HEK293T (cell line): ENCODE measurements at regions of chr1 and their contacts with region 1.

Region 1: GRCh38 chr1:225474986-225475820 is 47.4 kb upstream of the LBR start:
- DNase-seq: peak; percentile 94

Region 2: GRCh38 chr1:225428068-225428880 is 46.9 kb before region 1 on chr1:
- CTCF ChIA-PET with region 1: interaction called, 10 read pairs
- POLR2A ChIA-PET with region 1: no interaction called
- DNase-seq: peak; percentile 95

Region 3: DNA sequence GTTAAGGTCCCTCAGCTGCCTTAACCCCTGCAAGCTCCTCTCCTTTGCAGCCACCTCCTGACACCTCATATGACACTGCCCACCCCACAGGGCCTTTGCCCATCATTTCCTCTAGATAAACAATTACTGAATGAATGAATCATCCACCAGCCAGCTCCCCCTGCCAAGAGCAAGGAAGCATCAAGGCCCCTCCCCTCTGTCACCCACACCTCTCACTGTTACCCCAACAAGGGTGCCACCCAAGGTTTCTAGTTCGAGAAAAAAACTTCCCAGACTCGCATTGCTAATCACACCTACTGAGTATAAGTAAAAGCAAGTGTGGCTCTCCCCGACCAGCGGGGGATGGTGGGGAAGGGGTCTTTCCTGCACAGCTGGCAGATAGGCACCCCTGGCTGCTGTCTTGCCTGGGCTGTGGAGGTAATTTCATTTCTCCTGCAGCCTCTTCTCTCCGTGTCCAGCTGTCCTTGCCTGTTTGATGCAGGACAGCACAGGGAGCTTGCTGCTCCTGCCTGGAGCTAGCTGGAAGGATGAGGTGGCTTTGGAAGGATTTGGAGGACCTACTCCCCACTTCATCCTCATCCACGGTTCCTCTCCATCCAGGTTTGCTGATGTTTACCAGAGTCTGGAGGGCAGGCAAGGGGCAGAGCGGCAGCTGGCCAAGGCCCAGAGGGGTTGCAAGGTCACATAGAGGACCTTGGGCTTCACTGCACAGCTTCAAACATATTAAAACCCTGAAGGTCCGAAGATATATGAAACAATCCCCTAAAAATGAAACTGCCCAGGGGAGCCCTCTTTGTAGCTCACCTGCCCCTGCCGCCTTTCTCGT is 14.3 kb before region 1 on chr1:
- CTCF ChIA-PET with region 1: interaction called, 17 read pairs
- POLR2A ChIA-PET with region 1: no interaction called
- DNase-seq: no peak

Region 4: GRCh38 chr1:225772323-225772768 is 297.1 kb after region 1 on chr1:
- CTCF ChIA-PET with region 1: interaction called, 25 read pairs
- POLR2A ChIA-PET with region 1: interaction called, 25 read pairs
- DNase-seq: peak; percentile 92